ENCODE measurements at regions of chr1 and their contacts with region 1.

Region 1: GRCh38 chr1:173297798-173298391 is 90.8 kb upstream of the TNFSF4 start:
- DNase-seq: peak; percentile 69
- H3K4me3 Mint-ChIP-seq: no peak overlapping the region
- H3K27ac Mint-ChIP-seq: no peak overlapping the region
- H3K4me1 Mint-ChIP-seq: peaks cover 39% of the 10 kb centered on the region
- H3K27me3 Mint-ChIP-seq: peaks cover 1% of the 10 kb centered on the region

Region 2: DNA sequence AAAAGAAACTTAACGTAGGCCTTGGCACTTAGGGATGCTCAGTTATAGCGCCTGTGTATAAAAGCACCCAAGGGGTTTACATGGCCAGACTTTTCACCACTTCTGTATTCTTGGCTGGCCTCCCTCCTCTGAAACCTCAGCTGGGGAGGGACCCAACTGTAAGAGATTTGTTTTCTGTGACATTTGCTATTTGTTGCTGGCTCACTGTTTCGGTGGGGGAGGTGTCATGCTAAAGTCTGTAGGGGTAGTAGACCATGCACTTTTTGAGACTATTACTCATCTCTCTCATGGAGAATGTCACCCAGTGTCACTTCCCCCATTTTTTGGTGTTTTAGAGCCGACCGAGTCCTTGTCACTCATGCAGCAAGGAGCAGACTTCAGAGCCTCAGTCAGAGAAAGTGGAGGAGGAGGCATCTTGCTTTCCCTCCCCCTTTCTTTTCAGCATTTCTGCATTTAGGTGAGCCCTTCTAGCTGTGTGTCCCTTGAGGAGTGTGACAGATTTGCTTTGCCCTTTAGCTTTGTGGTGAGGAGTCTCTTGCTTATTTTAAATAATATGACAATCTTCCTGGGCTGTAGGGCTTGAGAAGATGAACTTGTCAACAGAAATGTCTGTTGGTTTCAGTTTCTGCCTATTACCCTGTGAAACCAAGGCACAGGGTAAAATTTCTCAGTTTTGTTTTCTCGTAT is 478.9 kb before region 1 on chr1:
- CTCF ChIA-PET with region 1: no interaction called
- POLR2A ChIA-PET with region 1: no interaction called
- intact Hi-C with region 1: loop called (anchors 1 kb)
- DNase-seq: peak; percentile 69
- H3K4me3 Mint-ChIP-seq: peak overlapping the region; percentile 4
- H3K27ac Mint-ChIP-seq: peak overlapping the region; percentile 63
- H3K4me1 Mint-ChIP-seq: peaks cover 24% of the 10 kb centered on the region
- H3K27me3 Mint-ChIP-seq: peaks cover 11% of the 10 kb centered on the region

Region 3: DNA sequence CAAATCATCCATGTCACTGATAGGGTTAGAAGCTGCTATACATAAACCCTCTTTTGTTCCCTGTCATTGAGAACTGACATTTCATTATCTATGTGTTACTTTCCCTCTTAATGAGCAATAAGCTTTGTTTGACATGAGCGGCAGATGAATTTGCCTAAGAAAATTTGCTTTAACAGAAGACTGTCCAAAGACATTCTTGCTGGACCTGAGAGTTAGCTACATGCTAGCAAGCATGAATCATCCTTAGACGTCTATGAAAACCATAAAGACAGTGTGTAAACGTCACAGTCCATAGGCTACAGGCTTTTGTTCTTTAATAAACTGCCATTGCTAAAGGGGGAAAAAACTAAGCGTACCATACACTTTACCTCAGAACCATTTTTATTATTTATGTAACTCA is 163.9 kb before region 1 on chr1:
- CTCF ChIA-PET with region 1: no interaction called
- POLR2A ChIA-PET with region 1: no interaction called
- intact Hi-C with region 1: no loop called
- DNase-seq: no peak
- H3K4me3 Mint-ChIP-seq: no peak overlapping the region
- H3K27ac Mint-ChIP-seq: no peak overlapping the region
- H3K4me1 Mint-ChIP-seq: no peaks in the 10 kb centered on the region
- H3K27me3 Mint-ChIP-seq: no peaks in the 10 kb centered on the region

Region 4: DNA sequence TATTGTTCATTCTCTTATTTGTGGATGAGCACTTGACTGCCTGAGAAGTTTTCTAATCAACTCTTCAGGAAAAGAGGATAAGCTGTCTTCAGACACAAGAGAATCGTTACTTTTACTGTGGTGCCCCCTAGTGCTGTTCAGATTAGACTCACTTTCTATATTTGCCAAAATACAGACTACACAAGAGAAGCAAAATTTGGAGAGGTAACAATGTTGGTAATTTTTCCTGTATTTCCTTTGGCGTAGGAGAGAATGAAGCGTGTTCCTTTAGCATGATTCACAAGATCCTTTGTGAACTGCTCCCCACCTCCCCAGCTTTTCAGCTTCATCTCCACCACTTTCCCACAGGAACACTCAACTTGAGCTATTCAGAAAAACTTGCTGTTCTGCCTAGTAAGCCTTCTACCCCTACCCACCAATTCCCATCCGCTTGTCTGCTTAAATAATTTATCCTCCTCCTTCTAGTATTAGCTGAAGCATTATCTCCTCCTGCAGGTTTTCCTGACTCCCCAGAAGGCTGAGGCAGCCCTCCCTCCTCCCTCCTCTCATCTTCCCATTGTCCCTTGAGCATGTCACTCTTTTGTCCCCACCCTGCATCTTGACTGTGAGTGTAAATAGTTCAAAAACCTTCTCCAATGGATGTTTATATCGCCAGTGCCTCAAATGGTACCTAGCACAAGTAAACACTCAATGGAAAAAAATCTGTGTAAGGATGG is 95.3 kb before region 1 on chr1:
- CTCF ChIA-PET with region 1: interaction called, 4 read pairs
- POLR2A ChIA-PET with region 1: interaction called, 6 read pairs
- intact Hi-C with region 1: loop called (anchors 1 kb)
- DNase-seq: no peak
- H3K4me3 Mint-ChIP-seq: no peak overlapping the region
- H3K27ac Mint-ChIP-seq: no peak overlapping the region
- H3K4me1 Mint-ChIP-seq: peaks cover 32% of the 10 kb centered on the region
- H3K27me3 Mint-ChIP-seq: peaks cover 3% of the 10 kb centered on the region

Region 5: DNA sequence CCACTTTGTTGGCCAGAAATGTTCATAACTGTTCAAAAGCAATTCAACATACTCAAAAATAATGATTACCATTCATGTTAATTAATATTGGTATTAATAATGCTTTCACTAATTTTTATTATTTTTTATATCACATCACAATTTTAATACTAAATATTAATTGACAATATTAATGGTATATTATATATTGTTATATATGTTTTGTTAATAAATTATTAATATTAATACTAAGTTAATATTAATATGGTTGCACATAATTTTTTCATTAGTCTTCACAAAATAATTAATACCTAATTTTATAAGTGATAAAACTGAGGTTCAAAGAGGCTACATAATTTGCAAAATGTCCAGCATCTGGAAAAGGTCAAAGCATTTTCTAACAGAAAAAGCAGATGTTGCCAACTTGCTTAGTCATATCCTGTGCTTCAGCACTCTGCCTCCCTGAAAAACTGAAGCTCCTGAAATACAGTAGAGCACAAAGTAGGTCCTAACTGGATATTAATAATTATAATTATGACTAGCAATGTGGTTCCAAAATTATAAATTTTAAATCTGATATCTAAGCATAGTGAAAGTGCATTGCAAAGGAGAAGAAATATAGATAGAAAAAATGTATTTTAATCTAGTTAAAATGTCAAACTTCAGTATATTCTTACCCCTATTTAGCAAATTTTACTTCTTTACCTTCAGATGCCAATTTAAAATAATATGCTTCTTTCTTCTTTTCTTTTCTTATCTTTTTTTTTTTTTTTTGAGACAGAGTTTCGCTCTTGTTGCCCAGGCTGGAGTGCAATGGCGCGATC is 32.5 kb after region 1 on chr1:
- CTCF ChIA-PET with region 1: no interaction called
- POLR2A ChIA-PET with region 1: no interaction called
- intact Hi-C with region 1: loop called (anchors 1 kb)
- DNase-seq: no peak
- H3K4me3 Mint-ChIP-seq: no peak overlapping the region
- H3K27ac Mint-ChIP-seq: no peak overlapping the region
- H3K4me1 Mint-ChIP-seq: peaks cover 20% of the 10 kb centered on the region
- H3K27me3 Mint-ChIP-seq: no peaks in the 10 kb centered on the region